ENCODE measurements at regions of chr20 and their contacts with region 1.

Region 1: GRCh38 chr20:12409501-12409900 is 491.8 kb downstream of the BTBD3 start:
- DNase-seq: no peak
- ATAC-seq: no peak
- H3K4me3 ChIP-seq: no peak overlapping the region
- H3K27ac ChIP-seq: no peak overlapping the region
- H3K4me1 ChIP-seq: no peaks in the 10 kb centered on the region
- H3K27me3 ChIP-seq: no peaks in the 10 kb centered on the region
- CTCF ChIP-seq: no peak
- POLR2A ChIP-seq: no peak
- RAD21 ChIP-seq: no peak

Region 2: GRCh38 chr20:12311094-12311865 is 98.2 kb before region 1 on chr20:
- CTCF ChIA-PET with region 1: no interaction called
- POLR2A ChIA-PET with region 1: interaction called, 13 read pairs
- dilution Hi-C with region 1: no loop called
- in situ Hi-C with region 1: no loop called
- intact Hi-C with region 1: no loop called
- DNase-seq: no peak
- ATAC-seq: no peak
- H3K4me3 ChIP-seq: no peak overlapping the region
- H3K27ac ChIP-seq: no peak overlapping the region
- H3K4me1 ChIP-seq: no peaks in the 10 kb centered on the region
- H3K27me3 ChIP-seq: no peaks in the 10 kb centered on the region
- CTCF ChIP-seq: no peak
- POLR2A ChIP-seq: no peak
- RAD21 ChIP-seq: no peak